ENCODE measurements at regions of chr10 and their contacts with region 1.

Region 1: DNA sequence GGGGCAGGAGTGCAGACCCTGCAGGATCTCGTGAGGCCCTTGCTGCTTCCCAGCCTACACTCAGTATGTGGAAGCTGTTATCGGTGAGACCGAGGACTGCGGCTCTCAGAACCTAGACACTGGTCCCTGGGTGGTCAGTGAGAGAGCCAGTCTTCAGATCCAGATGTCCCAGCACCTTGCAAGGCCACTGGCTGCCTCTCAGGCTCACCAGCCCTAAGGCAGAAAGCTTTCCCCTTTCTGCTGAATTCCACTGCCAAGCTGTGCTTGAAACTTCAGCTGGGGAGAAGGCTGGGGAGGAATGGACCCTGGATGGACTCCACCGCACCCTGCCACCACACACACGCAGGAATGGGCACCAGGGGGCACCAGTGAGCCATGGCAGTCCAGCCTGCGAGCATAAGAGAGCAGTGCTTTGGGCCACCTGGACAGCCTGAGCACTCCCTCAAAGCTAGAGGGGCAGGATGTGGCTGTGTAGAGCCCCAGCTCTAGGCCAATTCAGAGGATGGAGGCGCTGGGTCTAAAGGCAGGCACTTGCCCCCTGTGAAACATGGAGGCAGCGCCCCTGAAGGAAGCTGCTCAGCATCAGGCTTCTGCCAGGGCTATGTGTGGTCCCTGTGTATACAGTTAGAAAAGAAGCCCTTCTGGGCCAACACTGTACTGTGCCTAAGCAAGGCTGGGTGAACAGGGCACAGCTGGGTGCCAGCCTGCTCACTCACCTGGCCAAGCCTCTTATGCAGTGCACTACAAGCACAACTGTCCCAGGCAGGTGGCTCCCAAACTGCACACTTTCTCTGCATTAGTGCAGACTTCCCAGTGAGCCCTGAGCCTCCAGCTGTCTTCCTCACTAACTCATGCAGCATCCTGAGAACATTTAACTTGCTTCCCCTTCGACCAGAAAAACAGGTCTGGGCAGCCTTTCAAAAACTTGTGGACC is 21.6 kb downstream of the TMEM72 start:
- DNase-seq: peak; percentile 92 to 96
- ATAC-seq: peak; percentile 85 to 92 (median 90)
- H3K4me3 ChIP-seq: no peak overlapping the region
- H3K27ac ChIP-seq: peak overlapping the region in 3 of 10 donors; percentile 17 to 39 (median 26)
- H3K4me1 ChIP-seq: peaks cover 9 to 56% (median 43%) of the 10 kb centered on the region in 9 donors
- H3K27me3 ChIP-seq: no peaks in the 10 kb centered on the region
- CTCF ChIP-seq: peak; percentile 96 to 99 (median 98)

Region 2: DNA sequence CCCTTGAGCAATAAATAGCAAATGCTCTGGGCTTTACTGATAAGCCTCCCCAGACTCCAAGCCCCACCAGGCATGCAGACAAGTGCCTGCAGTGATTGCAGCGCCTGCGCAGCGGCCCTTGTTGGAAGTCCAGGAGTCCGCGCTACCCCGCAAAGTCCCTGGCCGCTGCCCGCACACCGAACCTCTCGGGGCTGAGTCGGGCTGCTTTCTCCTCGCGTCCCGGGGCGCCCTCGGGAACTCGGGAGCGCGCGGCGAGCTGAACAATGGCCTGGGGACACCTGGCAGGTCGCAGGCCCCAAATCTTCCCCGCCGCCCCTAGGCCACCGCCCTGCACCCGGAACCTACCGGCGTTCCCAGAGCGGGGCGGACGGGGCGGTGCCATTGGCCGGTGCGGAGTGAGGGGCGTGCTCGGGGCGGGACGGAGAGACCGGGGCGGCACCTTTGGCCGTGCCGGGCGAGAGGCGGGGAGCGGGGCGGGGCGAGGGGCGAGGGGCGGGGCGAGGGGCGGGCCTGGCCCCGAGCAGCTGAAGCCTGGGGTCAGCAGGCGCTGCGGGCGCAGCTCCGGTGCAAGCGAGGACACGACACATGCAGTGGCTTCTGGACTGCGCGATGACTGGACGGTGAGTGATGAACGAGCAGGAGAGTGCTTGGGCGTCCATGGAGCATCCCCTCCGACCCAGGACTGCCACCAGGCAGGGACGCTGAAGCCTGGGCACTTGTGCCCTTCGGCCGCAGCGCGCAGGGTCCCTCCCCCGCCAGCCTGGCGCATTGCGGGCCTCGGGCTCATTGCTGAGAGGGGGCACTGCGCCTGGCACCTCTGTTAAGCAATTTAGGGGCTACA is 26.7 kb after region 1 on chr10 and contains the start of gene RASSF4:
- intact Hi-C with region 1: loop called in 1 of 10 experiments (anchors 2 kb)
- DNase-seq: peak; percentile 94 to 97
- ATAC-seq: peak; percentile 88 to 95 (median 93)
- H3K4me3 ChIP-seq: peak within 1 kb of the TSS; percentile 65 to 92 (median 74)
- H3K27ac ChIP-seq: peak within 1 kb of the TSS; percentile 89 to 98 (median 94)
- H3K4me1 ChIP-seq: peaks cover 23 to 84% (median 81%) of the 10 kb centered on the region in 9 donors
- H3K27me3 ChIP-seq: no peaks in the 10 kb centered on the region
- CTCF ChIP-seq: peak in 1 of 9 donors; percentile 2
- total RNA-seq, gene RASSF4: 73.3 to 120 (median 79.9) TPM

Region 3: GRCh38 chr10:44974628-44975431 is 42.0 kb after region 1 on chr10:
- intact Hi-C with region 1: loop called (anchors 1 to 5 kb)
- DNase-seq: peak; percentile 69 to 76
- ATAC-seq: peak; percentile 65 to 80 (median 76)
- H3K4me3 ChIP-seq: peak overlapping the region in 8 of 10 donors; percentile 16 to 87 (median 74)
- H3K27ac ChIP-seq: peak overlapping the region; percentile 42 to 97 (median 91)
- H3K4me1 ChIP-seq: peaks cover 35 to 87% (median 70%) of the 10 kb centered on the region in 9 donors
- H3K27me3 ChIP-seq: no peaks in the 10 kb centered on the region
- CTCF ChIP-seq: peak; percentile 95 to 100 (median 98)

Region 4: DNA sequence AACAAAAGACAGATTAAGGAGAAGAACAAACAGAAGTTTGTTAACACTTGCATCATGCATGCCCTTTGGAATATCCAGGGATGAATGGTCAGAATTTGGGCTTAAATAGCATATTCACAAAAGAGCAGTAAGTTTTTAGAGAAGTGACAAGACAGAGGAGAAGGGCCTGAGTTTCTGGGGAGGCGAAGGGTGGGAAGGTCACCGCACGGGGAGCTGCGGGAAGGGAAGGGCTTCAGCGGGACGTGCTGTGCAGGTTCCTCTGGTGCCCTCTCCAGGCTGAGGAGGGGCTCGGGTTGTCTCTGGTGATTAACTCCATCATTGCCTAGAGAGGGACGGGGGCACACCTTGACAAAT is 57.5 kb after region 1 on chr10:
- intact Hi-C with region 1: loop called in 4 of 10 experiments (anchors 1 to 10 kb)
- DNase-seq: peak in 1 of 2 donors; percentile 42
- ATAC-seq: peak in 7 of 8 donors; percentile 33 to 66 (median 54)
- H3K4me3 ChIP-seq: no peak overlapping the region
- H3K27ac ChIP-seq: peak overlapping the region; percentile 8 to 99 (median 61)
- H3K4me1 ChIP-seq: peaks cover 30 to 86% (median 68%) of the 10 kb centered on the region in 9 donors
- H3K27me3 ChIP-seq: no peaks in the 10 kb centered on the region
- CTCF ChIP-seq: peak in 8 of 9 donors; percentile 36 to 65 (median 44)

Region 5: DNA sequence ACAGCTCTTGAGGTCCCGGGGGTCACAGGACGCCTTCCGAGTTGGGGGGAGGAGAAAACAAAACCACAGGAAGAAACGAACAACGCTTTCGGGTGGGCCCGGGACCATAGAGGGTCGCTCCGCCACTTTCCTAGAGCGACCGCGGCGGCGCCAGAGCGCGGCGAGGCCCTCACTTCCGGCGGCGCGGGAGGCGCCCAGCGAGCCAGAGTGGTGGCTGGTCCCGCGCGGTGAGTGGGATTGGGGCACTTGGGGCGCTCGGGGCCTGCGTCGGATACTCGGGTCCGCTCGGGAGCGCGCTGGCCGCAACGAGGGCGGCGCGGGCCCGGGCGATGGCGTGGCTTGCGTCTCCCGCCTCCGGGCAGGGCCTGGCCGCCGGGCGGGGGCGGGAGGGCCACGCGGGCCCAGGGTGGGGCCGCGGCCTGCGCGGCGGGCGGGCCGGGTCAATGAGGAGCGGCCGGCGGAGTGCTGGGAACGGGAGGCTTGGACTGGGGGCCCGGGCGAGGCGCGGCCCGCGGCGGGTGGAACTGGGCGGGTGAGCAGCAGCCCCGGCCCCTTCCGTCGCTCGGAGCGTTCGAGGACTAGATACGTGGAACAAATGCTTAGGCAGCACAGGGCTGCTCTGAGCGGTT is 68.1 kb after region 1 on chr10 and contains the start of gene ZNF22:
- intact Hi-C with region 1: loop called in 3 of 10 experiments (anchors 5 to 10 kb)
- DNase-seq: peak; percentile 80 to 81
- ATAC-seq: peak; percentile 50 to 83 (median 68)
- H3K4me3 ChIP-seq: peak within 1 kb of the TSS; percentile 29 to 75 (median 68)
- H3K27ac ChIP-seq: peak within 1 kb of the TSS; percentile 94 to 100 (median 97)
- H3K4me1 ChIP-seq: peaks cover 19 to 83% (median 70%) of the 10 kb centered on the region in 9 donors
- H3K27me3 ChIP-seq: no peaks in the 10 kb centered on the region
- CTCF ChIP-seq: peak in 3 of 9 donors; percentile 24 to 37 (median 32)
- total RNA-seq, gene ZNF22: 11.0 to 17.2 (median 15.4) TPM

Region 6: DNA sequence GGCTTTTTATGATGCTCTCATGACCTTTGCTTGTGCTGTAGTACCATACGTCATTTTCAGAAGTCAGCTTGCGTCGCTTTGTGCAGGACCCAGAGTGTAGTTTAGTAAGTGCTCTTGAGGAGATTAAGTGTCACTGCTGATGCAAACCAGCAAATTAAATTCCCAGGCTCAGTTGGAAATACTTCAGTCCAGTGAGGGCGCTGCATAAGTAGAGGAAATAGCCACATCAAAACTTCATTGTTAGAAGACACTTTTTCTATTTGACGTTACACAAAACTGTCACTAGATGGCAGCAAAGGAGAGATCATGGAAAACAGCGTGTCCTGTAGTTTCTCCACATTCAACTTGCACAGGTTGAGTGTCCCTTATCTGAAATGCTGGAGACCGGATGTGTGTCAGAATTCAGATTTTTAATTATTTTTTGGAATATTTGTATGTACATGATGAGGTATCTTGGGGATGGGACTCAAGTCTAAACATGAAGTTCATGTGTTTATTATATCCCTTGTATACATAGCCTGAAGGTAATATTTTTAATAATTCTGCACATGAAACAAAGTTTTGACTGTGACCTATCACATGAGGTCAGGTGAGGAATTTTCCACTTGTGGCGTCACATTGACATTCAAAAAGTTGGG is 75.9 kb after region 1 on chr10:
- intact Hi-C with region 1: loop called in 1 of 10 experiments (anchors 10 kb)
- DNase-seq: peak in 1 of 2 donors; percentile 47
- ATAC-seq: peak; percentile 71 to 94 (median 86)
- H3K4me3 ChIP-seq: peak overlapping the region in 1 of 10 donors; percentile 6
- H3K27ac ChIP-seq: peak overlapping the region in 1 of 10 donors; percentile 23
- H3K4me1 ChIP-seq: peaks cover 0 to 29% (median 18%) of the 10 kb centered on the region in 9 donors
- H3K27me3 ChIP-seq: no peaks in the 10 kb centered on the region
- CTCF ChIP-seq: peak; percentile 65 to 90 (median 81)

Region 7: GRCh38 chr10:45179691-45180090 is 246.9 kb after region 1 on chr10:
- intact Hi-C with region 1: no loop called
- DNase-seq: peak in 1 of 2 donors; percentile 8
- ATAC-seq: peak in 4 of 8 donors; percentile 19 to 56 (median 35)
- H3K4me3 ChIP-seq: no peak overlapping the region
- H3K27ac ChIP-seq: no peak overlapping the region
- H3K4me1 ChIP-seq: no peaks in the 10 kb centered on the region
- H3K27me3 ChIP-seq: peaks cover 0 to 8% (median 0%) of the 10 kb centered on the region in 7 donors
- CTCF ChIP-seq: no peak

Region 8: DNA sequence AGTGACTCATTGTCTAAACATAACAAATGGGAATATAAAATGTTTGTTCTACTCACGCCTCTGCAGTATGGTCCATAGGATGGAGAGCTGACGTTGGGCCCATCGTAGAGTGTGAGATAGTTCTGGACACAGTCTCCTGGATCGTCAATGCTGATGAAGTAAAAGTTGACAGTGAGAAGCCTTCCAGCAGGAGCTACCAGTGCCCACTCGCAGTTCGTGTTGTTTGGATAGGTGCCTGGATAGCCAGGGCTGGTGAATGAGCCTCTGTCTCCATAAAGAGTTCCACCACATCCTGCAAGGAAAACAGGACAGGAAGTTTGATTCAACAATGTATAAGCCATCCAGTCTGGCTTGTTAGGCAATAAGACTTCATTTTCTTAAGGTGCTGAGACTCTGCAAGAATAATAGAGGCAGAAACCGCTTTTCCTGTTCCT is 303.0 kb after region 1 on chr10:
- intact Hi-C with region 1: loop called in 1 of 10 experiments (anchors 10 kb)
- DNase-seq: no peak
- ATAC-seq: peak in 1 of 8 donors; percentile 58
- H3K4me3 ChIP-seq: no peak overlapping the region
- H3K27ac ChIP-seq: no peak overlapping the region
- H3K4me1 ChIP-seq: peaks cover 0 to 14% (median 0%) of the 10 kb centered on the region in 9 donors
- H3K27me3 ChIP-seq: peaks cover 0 to 16% (median 0%) of the 10 kb centered on the region in 7 donors
- CTCF ChIP-seq: no peak

Region 9: DNA sequence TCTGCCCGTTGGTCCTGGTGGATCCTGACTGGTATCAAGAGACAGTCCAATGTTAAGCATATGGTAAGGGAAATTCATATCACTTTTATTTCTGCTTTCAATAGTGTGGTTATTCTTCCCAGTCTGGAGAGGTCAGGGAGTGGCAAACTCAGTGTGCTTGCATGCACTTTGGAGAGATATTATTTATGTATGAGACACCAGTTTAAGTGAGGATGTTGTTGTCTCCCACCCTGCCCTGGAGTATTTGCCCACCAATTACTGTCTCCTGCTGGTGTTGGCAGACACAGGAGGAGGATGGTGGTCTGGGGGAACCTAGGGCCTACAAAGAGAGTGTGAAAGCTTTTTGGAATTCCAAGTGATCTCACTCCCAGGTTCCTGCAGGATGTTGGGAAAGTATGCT is 322.9 kb after region 1 on chr10:
- intact Hi-C with region 1: no loop called
- DNase-seq: no peak
- ATAC-seq: no peak
- H3K4me3 ChIP-seq: no peak overlapping the region
- H3K27ac ChIP-seq: no peak overlapping the region
- H3K4me1 ChIP-seq: peaks cover 0 to 5% (median 0%) of the 10 kb centered on the region in 9 donors
- H3K27me3 ChIP-seq: no peaks in the 10 kb centered on the region
- CTCF ChIP-seq: no peak

Measured in heart right ventricle (tissue), 16 donors.